Ovary (tissue), 10 donors: ENCODE measurements at regions of chr6 and their contacts with region 1.

Region 1: GRCh38 chr6:76697585-76697984 is 625.1 kb upstream of the IMPG1 start:
- DNase-seq: no peak
- H3K4me3 ChIP-seq: no peak overlapping the region
- H3K27ac ChIP-seq: no peak overlapping the region
- H3K4me1 ChIP-seq: no peaks in the 10 kb centered on the region
- H3K27me3 ChIP-seq: no peaks in the 10 kb centered on the region
- CTCF ChIP-seq: no peak
- EP300 ChIP-seq: no peak
- POLR2A ChIP-seq: no peak

Region 2: GRCh38 chr6:76671751-76672150 is 25.8 kb before region 1 on chr6:
- intact Hi-C with region 1: no loop called
- DNase-seq: no peak
- H3K4me3 ChIP-seq: no peak overlapping the region
- H3K27ac ChIP-seq: no peak overlapping the region
- H3K4me1 ChIP-seq: no peaks in the 10 kb centered on the region
- H3K27me3 ChIP-seq: no peaks in the 10 kb centered on the region
- CTCF ChIP-seq: no peak
- EP300 ChIP-seq: no peak
- POLR2A ChIP-seq: no peak

Region 3: DNA sequence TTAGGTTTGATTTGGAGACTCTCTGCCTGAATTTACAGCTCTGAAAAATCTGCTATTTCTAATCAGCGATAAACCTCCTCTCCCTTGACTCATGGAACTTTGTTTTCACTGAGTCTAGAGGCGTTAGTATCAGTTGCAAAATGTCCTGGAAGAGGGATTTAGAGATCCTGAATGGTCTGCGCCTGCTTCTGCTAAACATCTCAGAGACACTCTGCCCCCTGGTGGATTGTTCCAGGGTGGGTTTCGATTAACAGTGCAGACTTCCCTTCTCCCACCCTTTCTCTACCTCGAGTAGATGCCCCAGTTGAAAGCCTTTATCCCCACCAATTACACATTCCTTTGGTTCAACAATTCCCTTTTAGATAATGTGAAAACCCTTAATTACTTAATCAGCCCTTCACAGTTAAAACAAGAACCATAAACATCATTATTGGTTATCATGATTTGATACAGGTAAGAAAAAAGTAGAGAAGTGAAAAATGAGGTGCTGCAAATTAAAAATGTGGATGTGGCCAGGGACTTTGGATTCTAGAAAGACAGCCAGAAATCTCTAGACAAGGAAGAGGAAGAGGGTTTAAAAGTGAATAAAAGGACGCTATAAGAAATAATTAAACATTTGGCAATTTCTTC is 760.2 kb after region 1 on chr6:
- intact Hi-C with region 1: loop called in 1 of 4 experiments (anchors 10 kb)
- DNase-seq: peak; percentile 41 to 67 (median 63)
- H3K4me3 ChIP-seq: no peak overlapping the region
- H3K27ac ChIP-seq: no peak overlapping the region
- H3K4me1 ChIP-seq: no peaks in the 10 kb centered on the region
- H3K27me3 ChIP-seq: no peaks in the 10 kb centered on the region
- CTCF ChIP-seq: peak in 2 of 3 donors; percentile 13 to 47
- EP300 ChIP-seq: no peak
- POLR2A ChIP-seq: no peak